ENCODE measurements at regions of chr2 and their contacts with region 1.

Region 1: DNA sequence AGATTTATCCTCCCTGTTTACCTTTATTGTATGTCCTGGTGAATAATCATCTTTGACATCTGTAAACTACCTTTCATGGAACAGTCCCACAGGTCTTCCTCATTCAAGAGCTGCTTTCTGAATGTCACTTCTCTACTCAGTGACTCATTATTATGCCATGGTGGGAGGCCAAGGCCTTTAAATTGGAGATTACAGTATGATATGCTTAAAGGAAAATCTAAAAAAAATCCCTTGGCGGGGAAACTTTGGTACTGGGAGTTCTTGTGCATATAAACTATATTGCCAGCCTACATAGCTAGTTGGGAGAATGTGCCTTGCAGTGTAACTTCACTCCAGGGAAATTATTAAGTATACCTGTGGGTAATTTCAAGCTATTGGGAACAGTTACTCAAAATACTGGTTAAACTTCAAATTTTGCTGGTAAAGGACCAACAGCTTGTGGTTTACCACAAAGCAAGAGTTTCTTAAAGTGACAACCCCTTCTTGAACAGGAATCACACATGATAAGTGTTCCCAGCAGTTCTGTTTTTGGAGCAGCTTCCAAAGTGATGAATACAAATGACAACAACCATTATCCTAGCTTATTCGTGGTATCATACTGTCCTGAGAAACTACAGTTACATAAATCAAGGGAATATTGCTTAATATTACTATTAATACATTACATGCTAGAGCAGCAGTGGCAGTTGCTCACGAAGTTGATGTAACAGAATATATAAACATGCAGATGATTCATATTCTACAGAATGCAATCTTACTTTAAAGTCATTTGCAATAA is 713.2 kb downstream of the TDRD15 start:
- DNase-seq: no peak
- ATAC-seq: no peak
- H3K4me3 Mint-ChIP-seq: no peak overlapping the region
- H3K27ac Mint-ChIP-seq: no peak overlapping the region
- H3K4me1 Mint-ChIP-seq: no peaks in the 10 kb centered on the region
- H3K27me3 Mint-ChIP-seq: no peaks in the 10 kb centered on the region

Region 2: DNA sequence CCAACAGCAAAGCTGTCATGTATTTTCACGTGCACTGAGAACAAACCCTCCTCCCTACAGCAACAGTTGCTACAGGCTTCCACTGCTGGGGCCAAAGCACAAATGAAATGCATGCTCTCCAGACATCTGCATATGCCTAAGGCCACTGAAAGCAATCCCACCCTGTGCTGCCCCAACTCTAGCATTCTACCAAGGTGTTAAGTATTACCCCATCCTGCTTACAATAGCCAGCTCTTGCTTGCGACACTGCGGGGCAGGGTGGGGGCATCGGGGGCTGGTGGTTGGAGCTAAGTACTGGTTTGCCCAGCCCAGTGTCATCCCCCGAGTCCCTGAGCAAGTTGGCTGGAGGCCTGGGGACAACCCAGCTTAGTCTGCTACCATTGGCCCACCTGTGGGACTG is 29.4 kb after region 1 on chr2:
- CTCF ChIA-PET with region 1: no interaction called
- POLR2A ChIA-PET with region 1: interaction called, 11 read pairs
- intact Hi-C with region 1: no loop called
- DNase-seq: no peak
- ATAC-seq: no peak
- H3K4me3 Mint-ChIP-seq: no peak overlapping the region
- H3K27ac Mint-ChIP-seq: no peak overlapping the region
- H3K4me1 Mint-ChIP-seq: no peaks in the 10 kb centered on the region
- H3K27me3 Mint-ChIP-seq: no peaks in the 10 kb centered on the region

Region 3: GRCh38 chr2:22143840-22144239 is 306.9 kb after region 1 on chr2:
- CTCF ChIA-PET with region 1: no interaction called
- POLR2A ChIA-PET with region 1: no interaction called
- intact Hi-C with region 1: no loop called
- DNase-seq: no peak
- ATAC-seq: no peak
- H3K4me3 Mint-ChIP-seq: no peak overlapping the region
- H3K27ac Mint-ChIP-seq: no peak overlapping the region
- H3K4me1 Mint-ChIP-seq: no peaks in the 10 kb centered on the region
- H3K27me3 Mint-ChIP-seq: no peaks in the 10 kb centered on the region